CD4-positive, alpha-beta T cell (primary cell): ENCODE measurements at regions of chr7 and their contacts with region 1.

Region 1: GRCh38 chr7:3028071-3028757 is 15.5 kb downstream of the CARD11 start:
- DNase-seq: peak in 5 of 14 experiments; percentile 16 to 60 (median 23)
- ATAC-seq: peak; percentile 63
- H3K4me3 ChIP-seq: no peak overlapping the region
- H3K4me3 Mint-ChIP-seq: peak overlapping the region; percentile 73
- H3K27ac ChIP-seq: peak overlapping the region; percentile 15 to 31
- H3K27ac Mint-ChIP-seq: peak overlapping the region; percentile 93
- H3K4me1 ChIP-seq: peaks cover 24% of the 10 kb centered on the region
- H3K4me1 Mint-ChIP-seq: peaks cover 72% of the 10 kb centered on the region
- H3K27me3 ChIP-seq: no peaks in the 10 kb centered on the region
- H3K27me3 Mint-ChIP-seq: no peaks in the 10 kb centered on the region
- CTCF ChIP-seq: no peak

Region 2: GRCh38 chr7:2982831-2983230 is 45.4 kb before region 1 on chr7:
- CTCF ChIA-PET with region 1: no interaction called
- POLR2A ChIA-PET with region 1: interaction called, 3 read pairs
- intact Hi-C with region 1: loop called in 1 of 2 experiments (anchors 1 kb)
- DNase-seq: peak; percentile 37 to 80 (median 56)
- ATAC-seq: peak; percentile 84
- H3K4me3 ChIP-seq: no peak overlapping the region
- H3K4me3 Mint-ChIP-seq: peak overlapping the region; percentile 77
- H3K27ac ChIP-seq: peak overlapping the region in 1 of 2 donors; percentile 50
- H3K27ac Mint-ChIP-seq: peak overlapping the region; percentile 87
- H3K4me1 ChIP-seq: peaks cover 79% of the 10 kb centered on the region
- H3K4me1 Mint-ChIP-seq: peaks cover 90% of the 10 kb centered on the region
- H3K27me3 ChIP-seq: no peaks in the 10 kb centered on the region
- H3K27me3 Mint-ChIP-seq: no peaks in the 10 kb centered on the region
- CTCF ChIP-seq: no peak

Region 3: DNA sequence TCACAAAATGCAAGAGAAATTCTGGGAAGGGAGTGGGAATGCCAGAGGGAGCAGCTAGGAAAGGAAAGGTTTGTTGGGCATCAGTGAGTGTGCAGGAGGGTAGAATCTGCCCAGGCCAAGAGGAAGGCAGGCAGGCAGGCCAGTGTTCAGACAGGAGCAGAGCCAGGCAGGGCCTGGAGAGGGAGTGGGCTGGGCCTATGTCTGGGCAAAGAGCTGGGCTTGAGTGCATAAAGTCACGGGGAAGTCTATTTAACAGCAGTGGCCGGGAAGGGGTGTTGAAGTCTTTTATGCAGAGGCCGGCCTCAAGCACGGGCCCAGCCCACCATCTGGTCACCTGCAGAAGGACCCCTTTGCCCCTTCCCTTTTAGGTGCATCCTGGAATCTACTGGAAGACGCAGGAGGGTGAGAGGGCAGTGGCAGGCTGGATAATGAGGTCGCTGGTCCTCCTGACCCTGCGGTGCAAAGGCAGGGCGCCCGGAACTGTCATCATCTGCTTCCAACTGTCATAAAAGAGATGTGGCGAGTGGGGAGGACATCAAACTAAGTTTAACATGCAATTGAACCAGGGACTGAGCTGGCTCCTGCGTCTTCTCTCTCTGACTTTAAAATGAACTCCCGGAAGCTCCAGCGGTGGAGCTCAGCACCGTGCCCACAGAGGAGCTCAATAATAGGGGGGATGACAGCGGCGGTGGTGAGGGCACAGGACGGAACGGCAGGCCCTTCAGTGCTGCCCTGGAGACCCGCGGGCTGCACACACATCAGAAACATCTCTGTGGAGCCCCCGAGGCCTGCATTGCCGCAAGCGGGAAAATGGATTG is 14.0 kb before region 1 on chr7:
- CTCF ChIA-PET with region 1: no interaction called
- POLR2A ChIA-PET with region 1: no interaction called
- intact Hi-C with region 1: loop called in 1 of 2 experiments (anchors 1 kb)
- DNase-seq: no peak
- ATAC-seq: no peak
- H3K4me3 ChIP-seq: no peak overlapping the region
- H3K4me3 Mint-ChIP-seq: no peak overlapping the region
- H3K27ac ChIP-seq: no peak overlapping the region
- H3K27ac Mint-ChIP-seq: peak overlapping the region; percentile 44
- H3K4me1 ChIP-seq: peaks cover 39% of the 10 kb centered on the region
- H3K4me1 Mint-ChIP-seq: peaks cover 66% of the 10 kb centered on the region
- H3K27me3 ChIP-seq: no peaks in the 10 kb centered on the region
- H3K27me3 Mint-ChIP-seq: no peaks in the 10 kb centered on the region
- CTCF ChIP-seq: no peak